Posterior vena cava (tissue), 2 donors: ENCODE measurements at regions of chr11 and their contacts with region 1.

Region 1: GRCh38 chr11:118956094-118956846 is at the start of gene UPK2:
- DNase-seq: peak; percentile 96
- total RNA-seq, gene UPK2: not detected

Region 2: DNA sequence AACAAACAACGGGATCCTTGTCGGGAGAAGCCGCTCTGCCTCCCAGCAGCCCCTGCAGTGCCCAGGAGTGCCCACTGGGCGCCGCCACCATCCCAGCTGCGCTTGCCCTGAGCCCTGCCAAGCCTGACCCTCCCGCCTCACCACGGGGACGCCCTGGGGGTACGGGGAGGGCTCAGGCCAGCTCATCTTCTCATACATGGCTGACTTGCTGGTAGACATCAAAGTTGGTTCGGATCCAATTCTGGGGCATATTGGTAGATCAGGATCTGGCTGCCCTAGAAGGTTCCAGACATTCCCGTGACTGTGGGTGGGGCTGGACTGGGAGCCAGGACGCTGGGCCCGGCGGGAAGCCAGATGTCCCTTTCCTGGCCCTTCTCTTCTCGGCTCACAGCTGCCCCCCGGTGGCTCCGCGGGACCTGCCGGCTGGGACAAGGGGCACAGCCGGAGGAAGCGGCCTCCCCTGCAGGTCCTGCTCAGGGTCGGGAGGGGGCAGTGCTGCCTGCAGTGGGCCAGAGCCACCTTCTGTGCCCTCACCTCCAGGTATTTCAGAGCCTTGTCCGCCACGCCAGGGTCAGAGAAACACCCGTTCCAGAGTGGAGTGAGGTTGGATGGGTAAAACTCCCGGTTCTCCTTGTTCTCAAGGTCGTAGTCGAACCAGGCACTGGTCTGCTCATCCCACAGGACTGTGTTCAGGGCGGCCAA is 266.3 kb before region 1 on chr11:
- intact Hi-C with region 1: loop called (anchors 2 to 10 kb)
- DNase-seq: peak; percentile 98